ENCODE measurements at regions of chr19 and their contacts with region 1.

Region 1: DNA sequence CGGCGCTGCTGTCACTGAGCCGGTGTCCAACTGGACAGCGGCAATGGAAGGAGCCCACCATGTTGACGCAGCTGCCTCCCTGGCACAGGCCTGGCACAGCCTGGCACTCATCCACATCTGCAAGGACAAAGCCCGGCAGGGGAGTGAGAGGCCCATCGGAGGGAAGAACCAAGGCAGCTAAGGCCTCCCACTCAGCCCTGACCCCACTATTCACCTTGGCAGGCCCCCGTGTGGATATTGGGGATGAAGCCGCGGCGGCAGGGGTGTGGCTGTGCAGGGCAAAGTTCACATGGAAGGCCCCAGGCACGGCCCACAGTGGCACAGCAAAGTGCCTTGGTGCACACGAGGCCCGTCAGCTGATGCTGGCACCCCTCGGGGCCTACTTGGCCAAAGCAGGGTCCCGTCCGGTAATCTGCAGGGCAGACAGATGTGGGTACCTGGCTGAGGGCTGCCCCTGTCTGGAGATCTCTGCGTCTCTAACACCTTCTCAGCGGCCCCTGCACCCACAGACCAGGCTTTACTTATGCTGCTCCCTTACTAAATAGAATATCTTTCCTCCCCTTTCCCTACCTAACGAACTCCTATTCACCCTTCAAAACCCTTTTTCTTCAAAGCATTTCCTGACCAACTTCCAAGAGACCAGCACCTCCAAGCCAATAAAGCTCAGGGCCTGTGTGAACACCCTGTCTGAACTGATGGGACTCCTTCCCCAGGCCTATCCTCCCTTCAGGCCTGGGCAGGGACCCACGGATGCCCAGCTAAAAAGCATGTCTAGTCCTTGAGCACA is 7.5 kb downstream of the FBN3 start:
- DNase-seq: no peak
- H3K4me3 ChIP-seq: no peak overlapping the region
- H3K27ac ChIP-seq: no peak overlapping the region
- H3K4me1 ChIP-seq: no peaks in the 10 kb centered on the region
- H3K27me3 ChIP-seq: no peaks in the 10 kb centered on the region
- CTCF ChIP-seq: no peak

Region 2: GRCh38 chr19:7986321-7987083 is 155.4 kb before region 1 on chr19:
- CTCF ChIA-PET with region 1: no interaction called
- POLR2A ChIA-PET with region 1: no interaction called
- intact Hi-C with region 1: no loop called
- DNase-seq: no peak
- H3K4me3 ChIP-seq: no peak overlapping the region
- H3K27ac ChIP-seq: no peak overlapping the region
- H3K4me1 ChIP-seq: no peaks in the 10 kb centered on the region
- H3K27me3 ChIP-seq: no peaks in the 10 kb centered on the region
- CTCF ChIP-seq: no peak

Region 3: GRCh38 chr19:8161135-8161646 is 19.3 kb after region 1 on chr19:
- CTCF ChIA-PET with region 1: no interaction called
- POLR2A ChIA-PET with region 1: no interaction called
- intact Hi-C with region 1: no loop called
- DNase-seq: peak; percentile 66
- H3K4me3 ChIP-seq: no peak overlapping the region
- H3K27ac ChIP-seq: peak overlapping the region; percentile 70
- H3K4me1 ChIP-seq: peaks cover 6% of the 10 kb centered on the region
- H3K27me3 ChIP-seq: no peaks in the 10 kb centered on the region
- CTCF ChIP-seq: no peak

Region 4: GRCh38 chr19:8224394-8225145 is 82.7 kb after region 1 on chr19:
- CTCF ChIA-PET with region 1: no interaction called
- POLR2A ChIA-PET with region 1: interaction called, 22 read pairs
- intact Hi-C with region 1: no loop called
- DNase-seq: no peak
- H3K4me3 ChIP-seq: no peak overlapping the region
- H3K27ac ChIP-seq: no peak overlapping the region
- H3K4me1 ChIP-seq: no peaks in the 10 kb centered on the region
- H3K27me3 ChIP-seq: no peaks in the 10 kb centered on the region
- CTCF ChIP-seq: no peak

Measured in A673 (cell line).